Caco-2 (cell line): ENCODE measurements at regions of chr12 and their contacts with region 1.

Region 1: DNA sequence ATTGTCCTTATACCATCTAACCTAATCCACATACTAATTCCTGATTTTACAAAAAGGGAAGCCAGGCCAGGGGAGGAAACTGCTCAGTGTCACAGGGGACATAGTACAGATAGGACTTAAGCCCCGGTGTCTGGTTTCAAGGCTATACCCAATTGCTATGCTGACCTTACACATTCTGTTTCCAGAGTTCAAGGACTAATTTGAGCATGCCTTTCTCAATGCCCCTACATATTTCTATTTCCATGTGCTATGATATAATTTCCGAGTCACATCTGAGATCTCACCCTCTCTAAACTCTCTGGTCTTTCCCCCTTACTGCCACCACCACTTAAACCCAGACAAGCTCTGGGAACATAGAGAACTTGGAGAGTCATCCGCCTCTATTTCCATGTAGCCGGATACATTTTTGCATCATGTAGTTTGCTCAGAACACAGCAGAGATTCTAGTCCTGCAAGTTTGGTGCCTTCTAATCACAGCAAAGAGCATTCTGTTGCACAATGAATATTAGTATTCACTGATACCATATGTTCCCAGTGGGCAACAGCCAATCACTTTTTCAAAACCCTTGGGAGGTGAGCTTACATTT is 34.2 kb downstream of the PPM1H start:
- DNase-seq: peak in 1 of 2 experiments; percentile 39
- H3K4me3 ChIP-seq: no peak overlapping the region
- H3K4me3 Mint-ChIP-seq: peak overlapping the region; percentile 34
- H3K27ac Mint-ChIP-seq: peak overlapping the region; percentile 76
- H3K4me1 ChIP-seq: peaks cover 33% of the 10 kb centered on the region
- H3K4me1 Mint-ChIP-seq: peaks cover 10% of the 10 kb centered on the region
- H3K27me3 ChIP-seq: no peaks in the 10 kb centered on the region
- H3K27me3 Mint-ChIP-seq: no peaks in the 10 kb centered on the region
- CTCF ChIP-seq: no peak

Region 2: GRCh38 chr12:62484233-62484632 is 416.5 kb before region 1 on chr12:
- CTCF ChIA-PET with region 1: no interaction called
- POLR2A ChIA-PET with region 1: no interaction called
- intact Hi-C with region 1: no loop called
- DNase-seq: no peak
- H3K4me3 ChIP-seq: no peak overlapping the region
- H3K4me3 Mint-ChIP-seq: no peak overlapping the region
- H3K27ac Mint-ChIP-seq: no peak overlapping the region
- H3K4me1 ChIP-seq: no peaks in the 10 kb centered on the region
- H3K4me1 Mint-ChIP-seq: no peaks in the 10 kb centered on the region
- H3K27me3 ChIP-seq: no peaks in the 10 kb centered on the region
- H3K27me3 Mint-ChIP-seq: no peaks in the 10 kb centered on the region
- CTCF ChIP-seq: no peak

Region 3: DNA sequence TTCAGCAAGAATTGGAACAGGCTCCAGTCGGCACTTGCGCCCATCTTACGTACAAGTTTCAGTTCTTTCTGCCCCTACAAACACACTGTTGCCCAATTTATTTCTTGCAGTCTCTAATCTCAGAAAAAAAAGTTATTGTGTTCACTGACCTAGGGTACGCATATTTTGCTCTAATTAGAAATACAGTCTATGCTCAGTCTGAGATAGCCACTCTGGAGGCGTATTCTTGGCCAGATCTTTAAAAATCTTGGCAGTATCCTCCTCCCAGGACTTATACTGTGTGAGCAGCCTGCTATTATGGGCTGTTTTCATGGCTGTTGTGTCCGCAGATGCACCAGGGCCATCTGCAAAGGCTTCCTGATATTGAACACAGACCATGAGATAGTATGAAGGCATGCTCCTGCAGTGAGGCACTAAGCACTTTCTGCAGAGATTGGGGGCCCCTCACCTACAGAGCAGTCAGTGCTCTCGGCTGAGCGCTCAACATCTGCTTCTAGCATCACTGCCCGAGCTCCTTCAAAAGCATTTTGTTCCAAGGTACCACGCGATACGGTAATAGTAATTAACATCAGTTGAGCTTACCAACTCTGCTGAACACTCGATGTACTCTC is 23.7 kb before region 1 on chr12:
- CTCF ChIA-PET with region 1: no interaction called
- POLR2A ChIA-PET with region 1: interaction called, 18 read pairs
- intact Hi-C with region 1: no loop called
- DNase-seq: no peak
- H3K4me3 ChIP-seq: no peak overlapping the region
- H3K4me3 Mint-ChIP-seq: no peak overlapping the region
- H3K27ac Mint-ChIP-seq: peak overlapping the region; percentile 11
- H3K4me1 ChIP-seq: peaks cover 55% of the 10 kb centered on the region
- H3K4me1 Mint-ChIP-seq: peaks cover 52% of the 10 kb centered on the region
- H3K27me3 ChIP-seq: no peaks in the 10 kb centered on the region
- H3K27me3 Mint-ChIP-seq: no peaks in the 10 kb centered on the region
- CTCF ChIP-seq: no peak